Activated naive CD4-positive, alpha-beta T cell treated with anti-CD3 and anti-CD28 coated beads for 36 hours (primary cell): ENCODE measurements at regions of chr4 and their contacts with region 1.

Region 1: DNA sequence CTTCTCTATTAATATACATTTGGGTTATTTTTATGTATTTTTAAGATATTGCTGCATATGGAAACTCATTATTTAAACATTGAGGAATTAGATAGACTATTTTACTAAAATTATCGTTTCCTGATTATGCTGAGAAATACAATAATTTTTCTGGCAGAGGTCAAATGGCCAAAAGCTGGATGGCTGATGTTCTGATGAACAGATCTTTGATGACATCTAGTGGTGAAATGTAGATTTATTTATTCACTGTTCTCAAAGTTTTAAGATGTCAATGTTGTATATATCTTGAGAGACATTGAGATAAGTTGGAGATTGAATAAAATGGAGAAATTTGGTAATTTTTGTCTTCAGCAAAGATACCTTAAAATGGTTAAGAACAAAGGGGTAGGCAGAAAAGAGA is 96.2 kb downstream of the UGT8 start:
- DNase-seq: no peak
- H3K4me3 Mint-ChIP-seq: no peak overlapping the region
- H3K27ac Mint-ChIP-seq: no peak overlapping the region
- H3K4me1 Mint-ChIP-seq: no peaks in the 10 kb centered on the region
- H3K27me3 Mint-ChIP-seq: peaks cover 5% of the 10 kb centered on the region

Region 2: DNA sequence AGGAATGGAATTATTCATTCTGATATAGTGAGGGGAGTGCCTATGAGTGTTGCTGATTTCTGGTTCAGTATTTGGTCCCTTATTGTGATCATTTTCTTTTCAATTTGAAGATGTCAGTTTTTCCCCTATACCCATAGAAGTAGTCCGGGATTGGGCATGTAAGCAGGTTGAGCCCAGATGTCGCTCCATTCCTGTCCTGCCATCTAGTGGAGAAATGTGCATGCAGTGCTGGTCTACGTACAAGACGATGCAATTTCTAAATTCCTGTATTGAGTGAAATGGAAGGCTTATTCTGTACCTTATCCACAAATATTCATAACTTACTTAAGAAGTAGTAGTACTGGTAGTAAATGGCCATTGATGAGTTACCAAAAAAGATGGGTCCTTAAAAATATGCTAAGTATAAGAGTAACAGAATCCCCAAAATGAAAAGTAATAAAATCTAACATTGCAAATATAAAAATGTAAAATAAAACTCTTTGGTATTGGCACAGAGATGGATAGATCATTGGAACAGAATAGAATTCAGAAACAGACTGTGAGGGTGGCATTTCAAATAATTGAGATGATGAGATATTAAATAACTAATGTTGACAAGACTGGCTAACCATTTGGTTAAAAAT is 35.3 kb before region 1 on chr4:
- CTCF ChIA-PET with region 1: no interaction called
- intact Hi-C with region 1: loop called (anchors 5 kb)
- DNase-seq: peak; percentile 63
- H3K4me3 Mint-ChIP-seq: no peak overlapping the region
- H3K27ac Mint-ChIP-seq: no peak overlapping the region
- H3K4me1 Mint-ChIP-seq: no peaks in the 10 kb centered on the region
- H3K27me3 Mint-ChIP-seq: peaks cover 17% of the 10 kb centered on the region

Region 3: DNA sequence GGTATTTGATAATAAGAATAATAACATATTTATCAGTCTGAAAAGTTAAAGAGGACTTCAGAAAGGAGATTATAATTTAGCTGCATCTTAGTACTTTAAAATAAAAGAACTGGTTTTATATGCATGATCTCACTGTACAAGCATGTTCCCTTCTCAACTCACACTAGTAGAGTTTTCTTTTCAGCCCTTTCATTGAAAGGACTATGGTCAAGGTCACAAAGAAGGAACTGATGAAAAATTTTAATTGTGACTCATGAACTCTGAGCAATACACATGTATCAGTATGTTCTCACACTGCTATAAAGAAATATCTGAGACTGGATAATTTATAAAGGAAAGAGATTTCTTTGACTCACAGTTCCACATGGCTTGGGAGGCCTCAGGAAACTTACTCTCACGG is 492.4 kb after region 1 on chr4:
- CTCF ChIA-PET with region 1: no interaction called
- intact Hi-C with region 1: no loop called
- DNase-seq: no peak
- H3K4me3 Mint-ChIP-seq: no peak overlapping the region
- H3K27ac Mint-ChIP-seq: no peak overlapping the region
- H3K4me1 Mint-ChIP-seq: no peaks in the 10 kb centered on the region
- H3K27me3 Mint-ChIP-seq: no peaks in the 10 kb centered on the region